Caco-2 (cell line): ENCODE measurements at regions of chr10 and their contacts with region 1.

Region 1: GRCh38 chr10:97869091-97870042 is 19.7 kb downstream of the GOLGA7B start:
- DNase-seq: peak; percentile 87 to 90
- H3K4me3 ChIP-seq: no peak overlapping the region
- H3K4me3 Mint-ChIP-seq: no peak overlapping the region
- H3K27ac Mint-ChIP-seq: no peak overlapping the region
- H3K4me1 ChIP-seq: peaks cover 12% of the 10 kb centered on the region
- H3K4me1 Mint-ChIP-seq: no peaks in the 10 kb centered on the region
- H3K27me3 ChIP-seq: no peaks in the 10 kb centered on the region
- H3K27me3 Mint-ChIP-seq: peaks cover 10% of the 10 kb centered on the region
- CTCF ChIP-seq: peak; percentile 77 to 90

Region 2: GRCh38 chr10:97771055-97771811 is 98.1 kb before region 1 on chr10:
- CTCF ChIA-PET with region 1: interaction called, 6 read pairs
- POLR2A ChIA-PET with region 1: no interaction called
- intact Hi-C with region 1: loop called (anchors 5 kb)
- DNase-seq: peak in 1 of 2 experiments; percentile 50
- H3K4me3 ChIP-seq: peak overlapping the region; percentile 43
- H3K4me3 Mint-ChIP-seq: peak overlapping the region; percentile 75
- H3K27ac Mint-ChIP-seq: no peak overlapping the region
- H3K4me1 ChIP-seq: peaks cover 17% of the 10 kb centered on the region; the same call in 1 of the 2 replicates
- H3K4me1 Mint-ChIP-seq: peaks cover 7% of the 10 kb centered on the region
- H3K27me3 ChIP-seq: peaks cover 2% of the 10 kb centered on the region; the same call in 1 of the 2 replicates
- H3K27me3 Mint-ChIP-seq: peaks cover 12% of the 10 kb centered on the region
- CTCF ChIP-seq: no peak

Region 3: DNA sequence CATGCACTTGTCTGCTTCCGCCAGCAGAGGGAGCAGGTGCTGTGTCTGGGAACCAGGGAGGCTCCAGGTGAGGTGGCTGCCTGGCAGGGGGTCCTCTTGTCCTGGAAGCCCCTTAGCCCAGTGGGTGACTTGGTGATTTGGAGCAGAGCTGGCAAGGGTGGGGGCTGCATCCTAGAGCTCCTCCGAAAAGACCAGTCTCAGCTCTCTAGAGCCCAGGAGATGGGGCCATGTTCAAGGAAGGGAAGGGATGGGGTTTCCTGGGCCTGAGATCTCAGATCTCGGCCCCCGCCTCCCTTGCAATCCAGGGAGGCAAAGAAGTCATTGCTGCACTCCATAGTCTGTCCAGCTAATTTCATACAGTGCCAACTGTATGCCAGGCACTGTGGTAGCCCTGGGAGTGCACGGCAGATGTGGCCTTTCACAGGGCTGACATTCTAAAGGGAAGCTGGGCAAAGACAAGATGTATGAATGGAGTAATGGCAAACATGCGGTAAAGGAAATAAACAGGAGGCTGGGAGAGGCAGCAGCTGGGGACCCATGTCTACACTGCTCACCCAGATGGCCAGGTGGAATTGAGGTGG is 77.1 kb before region 1 on chr10:
- CTCF ChIA-PET with region 1: interaction called, 21 read pairs
- POLR2A ChIA-PET with region 1: interaction called, 3 read pairs
- intact Hi-C with region 1: loop called (anchors 1 kb)
- DNase-seq: peak; percentile 70 to 85
- H3K4me3 ChIP-seq: no peak overlapping the region
- H3K4me3 Mint-ChIP-seq: no peak overlapping the region
- H3K27ac Mint-ChIP-seq: no peak overlapping the region
- H3K4me1 ChIP-seq: peaks cover 40% of the 10 kb centered on the region
- H3K4me1 Mint-ChIP-seq: peaks cover 6% of the 10 kb centered on the region
- H3K27me3 ChIP-seq: no peaks in the 10 kb centered on the region
- H3K27me3 Mint-ChIP-seq: no peaks in the 10 kb centered on the region
- CTCF ChIP-seq: peak; percentile 95 to 96